Astrocyte of the cerebellum (primary cell): ENCODE measurements at regions of chr4 and their contacts with region 1.

Region 1: GRCh38 chr4:118981839-118982381 is 93.3 kb downstream of the SYNPO2 start:
- DNase-seq: peak; percentile 81
- H3K4me3 ChIP-seq: no peak overlapping the region
- CTCF ChIP-seq: peak; percentile 71

Region 2: GRCh38 chr4:118898684-118899138 is 83.2 kb before region 1 on chr4:
- in situ Hi-C with region 1: no loop called
- DNase-seq: no peak
- H3K4me3 ChIP-seq: no peak overlapping the region
- CTCF ChIP-seq: no peak

Region 3: GRCh38 chr4:118941149-118941548 is 40.8 kb before region 1 on chr4:
- in situ Hi-C with region 1: no loop called
- DNase-seq: no peak
- H3K4me3 ChIP-seq: no peak overlapping the region
- CTCF ChIP-seq: no peak

Region 4: GRCh38 chr4:118954246-118954645 is 27.7 kb before region 1 on chr4:
- in situ Hi-C with region 1: no loop called
- DNase-seq: no peak
- H3K4me3 ChIP-seq: no peak overlapping the region
- CTCF ChIP-seq: peak; percentile 52

Region 5: GRCh38 chr4:119118397-119118796 is 136.5 kb after region 1 on chr4:
- in situ Hi-C with region 1: no loop called
- DNase-seq: no peak
- H3K4me3 ChIP-seq: no peak overlapping the region
- CTCF ChIP-seq: no peak

Region 6: DNA sequence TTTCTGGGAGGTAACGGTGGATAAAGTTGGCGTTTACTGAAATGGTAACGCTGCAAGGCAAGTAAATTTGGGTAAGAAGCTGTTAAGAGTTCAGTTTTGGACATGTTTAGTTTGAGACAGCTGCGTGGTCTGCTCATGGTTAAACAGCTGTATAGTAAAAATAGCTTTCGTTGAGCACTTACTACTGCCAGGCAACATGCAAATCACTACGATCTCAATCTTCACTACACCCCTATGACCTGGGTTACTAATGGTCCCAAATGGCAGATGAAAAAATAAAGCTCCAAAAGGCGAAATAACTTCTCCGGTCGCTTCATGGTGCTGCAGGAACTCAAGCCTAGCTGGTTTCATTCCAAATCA is 317.8 kb after region 1 on chr4:
- in situ Hi-C with region 1: loop called (anchors 10 kb)
- DNase-seq: no peak
- H3K4me3 ChIP-seq: peak overlapping the region; percentile 90
- CTCF ChIP-seq: no peak